Heart right ventricle (tissue), 16 donors: ENCODE measurements at regions of chr17 and their contacts with region 1.

Region 1: DNA sequence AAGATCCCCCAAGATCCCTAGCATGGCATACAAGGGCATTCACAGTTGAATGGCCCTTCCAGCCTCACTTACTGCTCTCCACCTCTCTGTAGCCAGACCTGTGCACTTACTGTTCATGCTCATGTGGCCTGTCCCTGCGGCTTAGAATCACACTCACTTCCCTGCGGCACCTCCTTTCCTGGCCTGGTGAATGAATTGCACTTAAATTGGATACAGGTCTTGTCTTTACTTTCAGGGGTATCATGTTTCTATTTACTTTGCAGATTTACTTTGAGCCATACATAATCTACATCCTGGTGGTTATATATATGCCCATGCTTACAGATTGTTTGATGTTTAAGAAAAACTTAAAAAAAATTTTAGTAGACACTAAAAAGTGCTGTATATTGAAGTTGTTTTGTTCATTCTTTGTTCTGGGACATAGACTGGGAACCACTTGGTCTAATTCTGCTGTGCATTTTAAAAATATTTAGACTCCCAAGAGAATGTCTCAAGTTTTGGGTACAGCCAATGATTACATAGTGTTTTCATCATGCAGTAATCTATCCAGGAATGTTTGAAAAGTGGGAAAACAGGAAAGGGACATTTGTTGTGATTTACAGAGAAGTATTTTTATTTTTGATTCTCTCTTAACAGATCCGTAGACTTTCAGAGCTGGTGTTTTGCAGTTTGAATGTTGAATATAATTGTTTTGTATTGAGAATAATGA is 63.9 kb downstream of the NUP88 start:
- DNase-seq: no peak
- ATAC-seq: peak in 2 of 8 donors; percentile 63 to 84
- H3K4me3 ChIP-seq: no peak overlapping the region
- H3K27ac ChIP-seq: peak overlapping the region in 6 of 10 donors; percentile 5 to 70 (median 50)
- H3K4me1 ChIP-seq: peaks cover 0 to 7% (median 0%) of the 10 kb centered on the region in 9 donors
- H3K27me3 ChIP-seq: no peaks in the 10 kb centered on the region
- CTCF ChIP-seq: no peak

Region 2: DNA sequence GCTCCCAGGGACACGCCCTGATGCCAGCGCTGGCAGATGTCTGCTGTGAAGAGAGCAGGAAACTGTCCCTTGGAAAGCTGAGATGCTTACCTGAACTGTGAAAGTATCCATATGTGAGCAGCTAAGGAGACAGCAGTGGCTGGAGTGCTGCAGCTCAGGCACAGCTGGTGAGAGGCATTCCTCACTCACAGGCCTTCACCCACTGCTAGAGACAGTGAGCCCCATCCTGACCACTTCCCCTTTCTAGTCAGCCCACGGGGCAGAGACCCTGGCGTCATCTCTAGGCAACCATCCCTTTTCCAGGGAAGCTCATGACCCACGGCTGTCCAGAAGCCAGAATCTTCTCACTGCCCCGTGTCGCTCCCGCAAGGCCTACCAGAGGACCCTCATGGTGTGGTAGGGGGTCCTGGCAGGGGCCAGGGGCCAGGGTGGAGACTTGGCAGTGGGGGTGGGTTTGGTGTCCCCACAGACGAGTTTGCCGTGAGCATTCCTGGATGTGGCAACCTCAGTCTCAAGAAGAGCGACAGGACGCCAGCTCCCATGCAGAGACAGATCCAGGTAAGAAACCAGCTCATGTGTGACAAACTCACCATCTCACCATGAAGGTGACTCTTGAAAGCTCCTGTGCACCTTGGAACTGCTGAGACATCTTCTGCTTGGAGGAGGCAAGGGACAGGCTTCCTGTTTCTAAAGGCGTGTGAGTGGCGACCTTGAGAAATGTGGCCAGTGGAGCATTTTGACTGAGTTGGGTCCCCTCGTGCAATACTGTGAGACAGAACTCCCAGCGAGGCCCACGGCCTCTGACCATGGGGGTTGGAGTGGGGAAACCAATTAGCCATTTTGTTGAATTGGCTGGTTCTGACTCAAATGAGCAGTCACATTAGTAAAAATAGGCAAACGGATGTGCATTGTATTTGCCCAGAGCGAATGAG is 120.7 kb before region 1 on chr17 and contains the start of gene SCIMP:
- intact Hi-C with region 1: no loop called
- DNase-seq: peak in 1 of 2 donors; percentile 27
- ATAC-seq: peak; percentile 41 to 80 (median 60)
- H3K4me3 ChIP-seq: peak within 1 kb of the TSS in 3 of 10 donors; percentile 5 to 45 (median 11)
- H3K27ac ChIP-seq: peak within 1 kb of the TSS in 2 of 10 donors; percentile 31 to 82
- H3K4me1 ChIP-seq: peaks cover 0 to 25% (median 0%) of the 10 kb centered on the region in 9 donors
- H3K27me3 ChIP-seq: no peaks in the 10 kb centered on the region
- CTCF ChIP-seq: no peak
- total RNA-seq, gene SCIMP: 0.11 to 9.7 (median 0.73) TPM

Region 3: GRCh38 chr17:5405400-5405799 is 49.8 kb after region 1 on chr17:
- intact Hi-C with region 1: loop called in 2 of 10 experiments (anchors 5 to 10 kb)
- DNase-seq: no peak
- ATAC-seq: no peak
- H3K4me3 ChIP-seq: no peak overlapping the region
- H3K27ac ChIP-seq: no peak overlapping the region
- H3K4me1 ChIP-seq: no peaks in the 10 kb centered on the region
- H3K27me3 ChIP-seq: no peaks in the 10 kb centered on the region
- CTCF ChIP-seq: no peak